T-cell (primary cell): ENCODE measurements at regions of chr2 and their contacts with region 1.

Region 1: GRCh38 chr2:218292048-218293014 is at the start of gene TMBIM1:
- DNase-seq: peak; percentile 58 to 89 (median 75)
- ATAC-seq: peak; percentile 86 to 90 (median 86)
- H3K4me3 ChIP-seq: peak within 1 kb of the TSS; percentile 81 to 95
- H3K4me3 Mint-ChIP-seq: peak within 1 kb of the TSS; percentile 83 to 91 (median 91)
- H3K27ac ChIP-seq: peak within 1 kb of the TSS; percentile 90
- H3K27ac Mint-ChIP-seq: peak within 1 kb of the TSS; percentile 97 to 100
- H3K4me1 ChIP-seq: peaks cover 33 to 69% of the 10 kb centered on the region in 2 experiments
- H3K4me1 Mint-ChIP-seq: peaks cover 54 to 59% (median 57%) of the 10 kb centered on the region in 3 donors
- H3K27me3 ChIP-seq: peaks cover 0 to 2% of the 10 kb centered on the region in 2 experiments
- H3K27me3 Mint-ChIP-seq: no peaks in the 10 kb centered on the region
- total RNA-seq, gene TMBIM1: 78.8 to 166 (median 144) TPM

Region 2: GRCh38 chr2:218252509-218253231 is 39.7 kb before region 1 on chr2:
- CTCF ChIA-PET with region 1: interaction called, 4 to 5 read pairs
- POLR2A ChIA-PET with region 1: interaction called in 1 of 2 experiments, 14 read pairs
- DNase-seq: no peak
- ATAC-seq: no peak
- H3K4me3 ChIP-seq: no peak overlapping the region
- H3K4me3 Mint-ChIP-seq: no peak overlapping the region
- H3K27ac ChIP-seq: no peak overlapping the region
- H3K27ac Mint-ChIP-seq: peak overlapping the region in 1 of 2 donors; percentile 27
- H3K4me1 ChIP-seq: peaks cover 2 to 9% of the 10 kb centered on the region in 2 experiments
- H3K4me1 Mint-ChIP-seq: peaks cover 12 to 16% (median 15%) of the 10 kb centered on the region in 3 donors
- H3K27me3 ChIP-seq: no peaks in the 10 kb centered on the region
- H3K27me3 Mint-ChIP-seq: no peaks in the 10 kb centered on the region

Region 3: GRCh38 chr2:218269899-218270720 is 22.2 kb before region 1 on chr2 and contains the starts of genes AAMP and PNKD:
- CTCF ChIA-PET with region 1: interaction called, 44 to 54 read pairs
- POLR2A ChIA-PET with region 1: interaction called, 4 to 11 read pairs
- DNase-seq: peak; percentile 99 to 100 (median 100)
- ATAC-seq: peak; percentile 90 to 94 (median 91)
- H3K4me3 ChIP-seq: peak within 1 kb of the TSS; percentile 80 to 96
- H3K4me3 Mint-ChIP-seq: peak within 1 kb of the TSS; percentile 92 to 95 (median 94)
- H3K27ac ChIP-seq: peak within 1 kb of the TSS; percentile 59
- H3K27ac Mint-ChIP-seq: peak within 1 kb of the TSS; percentile 87 to 92
- H3K4me1 ChIP-seq: peaks cover 18 to 48% of the 10 kb centered on the region in 2 experiments
- H3K4me1 Mint-ChIP-seq: peaks cover 47 to 61% (median 52%) of the 10 kb centered on the region in 3 donors
- H3K27me3 ChIP-seq: no peaks in the 10 kb centered on the region
- H3K27me3 Mint-ChIP-seq: no peaks in the 10 kb centered on the region
- total RNA-seq, gene AAMP: 46.2 to 71.3 (median 67.4) TPM
- total RNA-seq, gene PNKD: 17.4 to 33.1 (median 30.6) TPM

Region 4: DNA sequence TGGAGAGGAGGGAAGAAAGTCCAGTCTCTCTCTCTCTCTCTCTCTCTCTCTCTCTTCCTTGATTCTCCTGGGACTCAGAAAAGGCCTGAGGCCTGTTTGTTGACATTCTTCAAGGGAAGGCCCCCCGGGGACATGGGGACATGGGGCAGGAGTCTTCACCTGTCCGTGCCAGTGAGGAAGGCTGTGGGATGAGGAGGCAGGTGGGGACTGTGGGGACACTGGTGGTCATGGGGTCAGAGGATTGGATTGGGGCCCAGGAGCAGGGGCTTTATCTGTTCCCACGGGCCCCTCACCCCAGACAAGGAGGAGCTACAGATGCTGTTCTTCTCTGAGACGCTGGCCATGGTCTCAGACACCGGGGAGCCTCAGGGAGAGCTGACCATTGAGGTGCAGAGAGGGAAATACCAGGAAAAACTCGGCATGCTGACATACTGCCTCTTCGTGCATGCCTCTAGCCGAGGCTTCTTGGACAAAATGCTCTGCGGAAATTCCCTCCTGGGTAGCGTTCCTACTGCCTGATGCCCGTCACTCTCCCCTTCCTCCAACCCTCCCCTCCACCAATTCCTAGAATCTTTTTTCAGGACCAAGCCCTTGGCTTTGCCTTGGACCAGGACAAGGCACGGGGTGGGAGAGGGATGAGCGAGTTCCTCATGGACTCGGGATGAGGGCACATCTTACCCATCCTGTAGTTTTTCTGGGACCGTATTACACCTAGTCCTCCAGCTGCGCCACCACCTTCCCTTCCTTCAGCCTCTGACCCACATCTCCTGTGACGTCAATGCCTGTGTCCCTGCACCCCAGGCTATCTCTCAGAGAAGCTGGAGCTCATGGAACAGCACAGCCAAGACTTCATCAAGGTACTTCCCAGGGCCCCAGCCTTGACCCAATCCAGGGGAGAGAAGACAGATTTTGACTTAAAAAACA is 65.2 kb after region 1 on chr2:
- CTCF ChIA-PET with region 1: interaction called, 7 to 18 read pairs
- POLR2A ChIA-PET with region 1: no interaction called
- DNase-seq: no peak
- ATAC-seq: no peak
- H3K4me3 ChIP-seq: no peak overlapping the region
- H3K4me3 Mint-ChIP-seq: no peak overlapping the region
- H3K27ac ChIP-seq: no peak overlapping the region
- H3K27ac Mint-ChIP-seq: no peak overlapping the region
- H3K4me1 ChIP-seq: peaks cover 0 to 8% of the 10 kb centered on the region in 2 experiments
- H3K4me1 Mint-ChIP-seq: peaks cover 0 to 4% (median 2%) of the 10 kb centered on the region in 3 donors
- H3K27me3 ChIP-seq: peaks cover 0 to 7% of the 10 kb centered on the region in 2 experiments
- H3K27me3 Mint-ChIP-seq: no peaks in the 10 kb centered on the region

Region 5: GRCh38 chr2:218395797-218396687 is 103.7 kb after region 1 on chr2:
- CTCF ChIA-PET with region 1: interaction called, 3 to 21 read pairs
- POLR2A ChIA-PET with region 1: no interaction called
- DNase-seq: peak; percentile 90 to 96 (median 93)
- ATAC-seq: peak; percentile 59 to 74 (median 66)
- H3K4me3 ChIP-seq: peak overlapping the region; percentile 84 to 98
- H3K4me3 Mint-ChIP-seq: peak overlapping the region; percentile 90 to 93 (median 92)
- H3K27ac ChIP-seq: peak overlapping the region; percentile 99
- H3K27ac Mint-ChIP-seq: peak overlapping the region; percentile 98 to 99
- H3K4me1 ChIP-seq: peaks cover 25 to 65% of the 10 kb centered on the region in 2 experiments
- H3K4me1 Mint-ChIP-seq: peaks cover 32 to 48% (median 39%) of the 10 kb centered on the region in 3 donors
- H3K27me3 ChIP-seq: no peaks in the 10 kb centered on the region
- H3K27me3 Mint-ChIP-seq: no peaks in the 10 kb centered on the region

Region 6: GRCh38 chr2:218607436-218608115 is 315.2 kb after region 1 on chr2 and contains the start of gene PLCD4:
- CTCF ChIA-PET with region 1: no interaction called
- POLR2A ChIA-PET with region 1: no interaction called
- DNase-seq: no peak
- ATAC-seq: no peak
- H3K4me3 ChIP-seq: no peak within 1 kb of the TSS
- H3K4me3 Mint-ChIP-seq: no peak within 1 kb of the TSS
- H3K27ac ChIP-seq: no peak within 1 kb of the TSS
- H3K27ac Mint-ChIP-seq: no peak within 1 kb of the TSS
- H3K4me1 ChIP-seq: no peaks in the 10 kb centered on the region
- H3K4me1 Mint-ChIP-seq: no peaks in the 10 kb centered on the region
- H3K27me3 ChIP-seq: peaks cover 0 to 14% of the 10 kb centered on the region in 2 experiments
- H3K27me3 Mint-ChIP-seq: peaks cover 14 to 16% of the 10 kb centered on the region in 2 donors
- total RNA-seq, gene PLCD4: 0.38 to 0.90 (median 0.64) TPM

Region 7: DNA sequence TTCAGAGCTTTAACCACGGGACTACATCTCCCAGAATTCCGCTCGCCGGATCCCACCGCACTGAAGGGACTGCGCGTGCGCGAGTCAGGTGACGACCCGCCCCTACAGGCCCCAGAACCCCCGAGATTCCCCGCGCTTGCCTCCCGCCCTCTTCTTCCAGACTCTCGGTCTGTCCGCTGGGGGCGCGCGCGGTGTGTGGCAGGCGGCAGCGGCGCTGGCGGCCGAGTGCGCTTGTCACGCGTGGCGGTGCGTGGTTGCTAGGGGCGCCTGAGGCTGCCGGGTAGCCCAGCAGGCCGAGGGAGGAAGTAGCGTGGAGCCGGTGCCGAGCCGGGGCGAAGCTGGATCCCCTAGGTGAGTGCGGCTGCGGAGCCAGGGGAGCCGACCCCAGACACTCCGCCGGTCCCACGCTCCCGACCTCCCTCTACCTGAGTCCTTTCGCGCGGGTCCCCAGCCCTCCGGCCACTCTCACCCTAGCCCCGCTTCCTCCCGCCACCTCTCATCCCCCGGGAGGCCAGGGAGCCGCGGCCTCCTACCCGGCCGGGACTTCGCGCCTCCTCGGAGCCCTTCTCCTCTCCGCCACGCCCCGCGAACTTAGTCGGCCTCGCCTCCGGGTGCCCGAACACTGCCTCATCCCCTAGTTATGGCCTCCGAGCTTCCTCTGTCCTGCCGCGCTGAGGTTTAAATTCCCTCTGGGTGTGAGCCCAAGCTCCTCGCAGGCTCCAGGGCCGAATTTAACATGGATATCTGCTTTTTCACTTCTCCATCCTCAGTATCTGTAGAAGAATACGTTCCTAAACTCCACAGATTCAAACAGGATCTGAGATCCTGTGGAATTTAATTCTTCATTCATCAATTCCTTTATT is 418.6 kb after region 1 on chr2 and contains the start of gene TTLL4:
- CTCF ChIA-PET with region 1: no interaction called
- POLR2A ChIA-PET with region 1: interaction called in 1 of 2 experiments, 11 read pairs
- DNase-seq: peak; percentile 95 to 99 (median 98)
- ATAC-seq: peak; percentile 97 to 100 (median 98)
- H3K4me3 ChIP-seq: peak within 1 kb of the TSS; percentile 81 to 98
- H3K4me3 Mint-ChIP-seq: peak within 1 kb of the TSS; percentile 92 to 98 (median 95)
- H3K27ac ChIP-seq: peak within 1 kb of the TSS; percentile 78
- H3K27ac Mint-ChIP-seq: peak within 1 kb of the TSS; percentile 86 to 87
- H3K4me1 ChIP-seq: peaks cover 6 to 21% of the 10 kb centered on the region in 2 experiments
- H3K4me1 Mint-ChIP-seq: peaks cover 19 to 22% (median 21%) of the 10 kb centered on the region in 3 donors
- H3K27me3 ChIP-seq: peaks cover 0 to 6% of the 10 kb centered on the region in 2 experiments
- H3K27me3 Mint-ChIP-seq: peaks cover 5 to 9% of the 10 kb centered on the region in 2 donors
- total RNA-seq, gene TTLL4: 16.9 to 29.6 (median 24.4) TPM